ENCODE measurements at regions of chr7 and their contacts with region 1.

Region 1: DNA sequence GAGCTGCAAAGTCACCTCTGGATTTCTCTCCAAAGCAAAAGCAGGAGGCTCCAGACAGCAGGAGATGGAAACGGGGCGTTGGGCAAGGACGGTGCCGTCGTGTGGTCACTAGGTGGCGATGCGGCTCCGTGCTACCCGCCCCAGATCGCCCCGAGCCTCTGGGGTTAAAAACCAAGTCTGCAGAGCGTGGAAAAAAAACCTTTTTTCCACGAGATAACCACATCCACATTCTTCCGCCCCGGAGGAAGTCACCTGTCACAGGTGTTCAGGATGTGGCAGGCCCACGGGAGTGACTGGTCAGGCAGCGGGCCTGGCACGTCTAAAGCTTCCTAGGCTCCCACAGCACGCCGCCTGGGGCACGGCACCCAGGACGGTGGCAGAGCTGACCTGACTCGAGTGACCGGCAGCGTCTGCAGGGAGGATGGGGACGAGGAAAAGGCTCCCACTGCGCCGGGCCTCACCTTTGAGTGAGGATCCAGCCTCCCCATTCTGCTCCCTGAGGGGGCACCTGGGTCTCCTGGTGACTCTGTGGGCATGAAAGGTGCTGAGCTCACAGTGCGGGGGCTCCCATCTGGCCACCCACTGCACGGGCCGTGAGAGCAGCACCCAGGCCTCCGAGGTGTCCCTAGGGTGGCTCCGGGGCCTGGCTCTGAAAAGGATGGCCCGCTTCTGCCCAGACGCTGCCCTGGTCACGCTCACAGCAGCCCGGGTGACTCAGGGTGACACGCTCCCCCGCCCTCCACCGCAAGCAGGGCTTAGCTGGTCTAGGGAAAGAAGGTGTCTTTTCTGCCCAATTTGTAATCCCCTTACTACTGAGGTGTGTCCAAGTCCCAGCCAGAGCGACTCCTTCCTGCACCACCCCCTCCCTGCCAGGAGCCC is 71.3 kb upstream of the TNRC18 start:
- DNase-seq: peak; percentile 73
- H3K4me3 Mint-ChIP-seq: no peak overlapping the region
- H3K27ac Mint-ChIP-seq: no peak overlapping the region
- H3K4me1 Mint-ChIP-seq: peaks cover 12% of the 10 kb centered on the region
- H3K27me3 Mint-ChIP-seq: no peaks in the 10 kb centered on the region

Region 2: GRCh38 chr7:5423844-5424688 is 70.9 kb before region 1 on chr7:
- intact Hi-C with region 1: no loop called
- DNase-seq: no peak
- H3K4me3 Mint-ChIP-seq: peak overlapping the region; percentile 79
- H3K27ac Mint-ChIP-seq: peak overlapping the region; percentile 81
- H3K4me1 Mint-ChIP-seq: peaks cover 17% of the 10 kb centered on the region
- H3K27me3 Mint-ChIP-seq: peaks cover 48% of the 10 kb centered on the region

Region 3: DNA sequence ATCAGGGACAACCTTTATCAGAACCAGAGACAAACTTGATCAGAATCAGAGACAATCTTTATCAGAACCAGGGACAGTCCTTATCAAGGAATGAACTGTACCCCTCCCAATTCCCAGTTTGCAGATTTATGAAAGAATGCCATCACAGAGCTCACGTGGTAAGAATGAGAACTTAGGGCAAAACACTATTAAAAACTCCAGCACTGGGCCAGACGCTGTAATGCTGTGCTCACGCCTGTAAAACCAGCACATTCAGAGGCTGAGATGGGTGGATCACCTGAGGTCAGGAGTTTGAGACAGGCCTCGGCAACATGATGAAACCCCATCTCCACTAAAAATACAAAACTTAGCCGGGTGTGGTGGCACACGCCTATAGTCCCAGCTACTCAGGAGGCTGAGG is 13.8 kb after region 1 on chr7:
- intact Hi-C with region 1: loop called (anchors 1 kb)
- DNase-seq: no peak
- H3K4me3 Mint-ChIP-seq: no peak overlapping the region
- H3K27ac Mint-ChIP-seq: no peak overlapping the region
- H3K4me1 Mint-ChIP-seq: peaks cover 10% of the 10 kb centered on the region
- H3K27me3 Mint-ChIP-seq: no peaks in the 10 kb centered on the region

Region 4: GRCh38 chr7:5557920-5558401 is 63.0 kb after region 1 on chr7:
- intact Hi-C with region 1: loop called (anchors 1 kb)
- DNase-seq: no peak
- H3K4me3 Mint-ChIP-seq: peak overlapping the region; percentile 79
- H3K27ac Mint-ChIP-seq: peak overlapping the region; percentile 70
- H3K4me1 Mint-ChIP-seq: peaks cover 35% of the 10 kb centered on the region
- H3K27me3 Mint-ChIP-seq: peaks cover 9% of the 10 kb centered on the region

Region 5: DNA sequence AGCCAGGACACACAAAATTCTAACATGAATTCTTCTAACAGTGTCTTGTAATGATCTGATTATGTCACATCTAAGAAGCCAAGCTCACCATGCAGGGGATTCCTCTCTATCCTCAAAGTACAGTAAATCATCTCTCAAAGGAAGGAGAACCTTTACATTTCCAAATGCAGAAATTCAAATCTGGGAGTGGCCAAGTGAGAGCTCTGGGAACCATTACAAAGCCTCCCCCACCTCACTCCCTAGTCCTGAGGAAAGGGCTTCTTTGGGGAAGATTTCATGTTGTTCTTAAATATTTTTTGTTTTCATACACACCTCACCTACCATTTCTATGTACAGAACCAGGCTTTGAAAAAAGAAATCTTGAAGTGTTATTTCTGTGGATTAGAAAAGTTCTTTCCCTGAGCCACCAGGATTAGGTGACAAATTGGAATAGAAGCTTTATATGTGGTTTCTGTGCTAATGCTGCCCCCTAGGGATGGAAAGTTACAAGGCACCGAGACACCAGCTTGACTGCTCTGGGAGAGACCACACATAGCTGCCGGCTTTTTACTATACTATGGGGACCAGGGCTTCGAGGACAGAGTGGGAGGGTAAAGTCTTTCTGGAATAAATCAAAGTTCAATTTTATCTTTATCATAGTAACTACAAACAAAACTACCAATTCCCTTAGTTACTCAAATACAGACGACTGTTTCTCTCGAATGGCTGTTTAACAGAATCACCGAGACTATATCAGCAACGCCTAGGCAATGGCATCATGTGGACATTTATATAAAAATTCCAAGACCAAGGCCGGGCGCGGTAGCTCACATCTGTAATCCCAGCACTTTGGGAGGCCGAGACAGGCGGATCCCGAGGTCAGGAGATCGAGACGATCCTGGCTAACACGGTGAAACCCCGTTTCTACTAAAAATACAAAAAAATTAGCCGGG is 170.4 kb after region 1 on chr7:
- intact Hi-C with region 1: loop called (anchors 1 kb)
- DNase-seq: peak; percentile 59
- H3K4me3 Mint-ChIP-seq: no peak overlapping the region
- H3K27ac Mint-ChIP-seq: no peak overlapping the region
- H3K4me1 Mint-ChIP-seq: peaks cover 23% of the 10 kb centered on the region
- H3K27me3 Mint-ChIP-seq: no peaks in the 10 kb centered on the region

Region 6: DNA sequence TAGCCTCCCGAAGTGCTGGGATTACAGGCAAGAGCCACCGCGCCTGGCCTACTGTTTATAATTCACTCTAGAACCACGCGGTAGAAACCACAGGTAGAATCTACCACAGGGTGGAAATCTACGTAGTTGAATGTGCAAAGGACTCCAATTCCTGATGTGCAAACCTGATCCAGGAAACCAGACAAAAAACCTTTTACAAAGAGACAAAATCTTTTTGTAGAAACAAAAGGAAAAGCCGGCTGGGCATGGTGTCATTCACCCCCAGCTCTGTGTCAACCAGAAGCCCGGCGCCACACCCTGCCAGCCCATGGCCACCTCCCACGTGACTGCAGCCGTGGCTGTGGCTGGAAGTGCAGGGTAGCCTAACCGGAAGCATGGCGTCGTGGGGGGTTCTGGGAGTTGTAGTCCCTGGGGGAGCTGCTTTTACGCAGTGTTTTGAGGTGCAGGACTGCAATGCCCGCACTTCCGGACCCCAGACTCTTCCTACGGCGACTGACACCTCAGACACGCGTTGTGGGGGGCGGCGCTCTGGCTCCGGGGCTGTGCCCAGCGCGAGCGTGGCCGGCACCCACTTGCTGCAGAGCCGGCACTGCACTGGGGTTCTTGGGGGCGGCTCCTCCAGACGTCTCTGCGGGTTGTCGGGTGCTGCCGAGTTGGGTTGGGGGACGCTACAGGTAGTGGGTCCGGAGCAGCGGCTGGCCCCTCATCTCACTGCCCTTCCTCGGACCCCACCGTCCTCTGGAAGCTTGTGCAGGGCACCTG is 328.0 kb after region 1 on chr7:
- intact Hi-C with region 1: loop called (anchors 5 kb)
- DNase-seq: peak; percentile 95
- H3K4me3 Mint-ChIP-seq: peak overlapping the region; percentile 87
- H3K27ac Mint-ChIP-seq: peak overlapping the region; percentile 82
- H3K4me1 Mint-ChIP-seq: peaks cover 12% of the 10 kb centered on the region
- H3K27me3 Mint-ChIP-seq: no peaks in the 10 kb centered on the region

Region 7: GRCh38 chr7:6571160-6571779 is 1076.3 kb after region 1 on chr7:
- intact Hi-C with region 1: no loop called
- DNase-seq: no peak
- H3K4me3 Mint-ChIP-seq: no peak overlapping the region
- H3K27ac Mint-ChIP-seq: no peak overlapping the region
- H3K4me1 Mint-ChIP-seq: no peaks in the 10 kb centered on the region
- H3K27me3 Mint-ChIP-seq: peaks cover 3% of the 10 kb centered on the region